ENCODE measurements at regions of chr10 and their contacts with region 1.

Region 1: GRCh38 chr10:77391605-77392235 is 245.9 kb downstream of the KCNMA1 start:
- DNase-seq: peak; percentile 74 to 84
- ATAC-seq: peak; percentile 82 to 84
- H3K4me3 ChIP-seq: no peak overlapping the region
- H3K27ac ChIP-seq: peak overlapping the region; percentile 69 to 83
- H3K4me1 ChIP-seq: peaks cover 53% of the 10 kb centered on the region
- CTCF ChIP-seq: peak; percentile 73
- EP300 ChIP-seq: no peak; a peak in 1 of 5 replicates
- POLR2A ChIP-seq: no peak
- RAD21 ChIP-seq: peak; percentile 78 to 83

Region 2: DNA sequence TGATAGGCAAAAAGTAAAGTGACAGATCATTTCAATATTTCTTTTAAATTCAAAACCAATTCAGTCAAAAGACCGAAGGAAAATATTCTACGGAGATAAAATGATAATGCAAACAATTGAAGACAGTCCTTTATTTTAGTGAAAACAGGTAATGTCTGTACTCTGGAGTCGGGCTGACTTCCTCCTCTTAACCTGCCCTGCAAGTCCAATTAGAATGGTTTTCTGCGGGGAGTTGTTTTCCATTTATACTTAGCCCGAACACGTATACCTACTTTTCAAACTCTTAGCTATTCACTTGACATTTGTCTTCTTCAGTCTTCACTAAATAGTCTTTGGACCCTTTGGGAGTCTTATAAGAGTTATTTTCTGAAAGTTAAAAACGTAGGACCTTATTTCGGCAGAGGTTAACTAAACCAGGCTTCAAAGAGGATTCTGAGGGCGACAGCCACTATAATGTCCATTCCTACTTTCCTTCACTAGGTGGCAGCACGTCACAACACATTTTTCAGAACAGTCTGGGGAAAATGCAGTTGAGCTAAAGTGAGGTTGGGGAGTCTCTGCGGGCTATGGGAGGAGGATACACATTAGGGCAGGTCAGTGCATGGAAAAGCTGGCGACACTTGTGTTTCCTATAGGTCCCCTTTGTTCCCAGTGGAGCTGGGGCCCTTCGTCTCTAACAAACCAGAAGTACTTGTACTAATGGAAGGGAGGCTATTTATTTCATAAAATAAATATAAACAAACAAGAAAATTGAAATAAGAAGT is 226.1 kb before region 1 on chr10:
- CTCF ChIA-PET with region 1: interaction called, 10 read pairs
- POLR2A ChIA-PET with region 1: no interaction called
- DNase-seq: peak; percentile 40 to 68
- ATAC-seq: peak; percentile 44 to 71; a peak in 5 of 6 replicates
- H3K4me3 ChIP-seq: no peak overlapping the region
- H3K27ac ChIP-seq: peak overlapping the region in 1 of 2 experiments; percentile 81; a peak in 4 of 6 replicates
- H3K4me1 ChIP-seq: peaks cover 48% of the 10 kb centered on the region
- CTCF ChIP-seq: peak; percentile 86
- EP300 ChIP-seq: no peak
- POLR2A ChIP-seq: no peak
- RAD21 ChIP-seq: peak; percentile 87 to 90

Region 3: GRCh38 chr10:77297393-77297739 is 94.4 kb before region 1 on chr10:
- CTCF ChIA-PET with region 1: interaction called, 10 read pairs
- POLR2A ChIA-PET with region 1: interaction called, 3 read pairs
- DNase-seq: peak in 1 of 2 experiments; percentile 25
- ATAC-seq: peak in 1 of 2 experiments; percentile 49; a peak in 2 of 6 replicates
- H3K4me3 ChIP-seq: no peak overlapping the region
- H3K27ac ChIP-seq: peak overlapping the region; percentile 10 to 69; a peak in 4 of 6 replicates
- H3K4me1 ChIP-seq: peaks cover 48% of the 10 kb centered on the region
- CTCF ChIP-seq: no peak
- EP300 ChIP-seq: no peak
- POLR2A ChIP-seq: no peak
- RAD21 ChIP-seq: no peak

Region 4: DNA sequence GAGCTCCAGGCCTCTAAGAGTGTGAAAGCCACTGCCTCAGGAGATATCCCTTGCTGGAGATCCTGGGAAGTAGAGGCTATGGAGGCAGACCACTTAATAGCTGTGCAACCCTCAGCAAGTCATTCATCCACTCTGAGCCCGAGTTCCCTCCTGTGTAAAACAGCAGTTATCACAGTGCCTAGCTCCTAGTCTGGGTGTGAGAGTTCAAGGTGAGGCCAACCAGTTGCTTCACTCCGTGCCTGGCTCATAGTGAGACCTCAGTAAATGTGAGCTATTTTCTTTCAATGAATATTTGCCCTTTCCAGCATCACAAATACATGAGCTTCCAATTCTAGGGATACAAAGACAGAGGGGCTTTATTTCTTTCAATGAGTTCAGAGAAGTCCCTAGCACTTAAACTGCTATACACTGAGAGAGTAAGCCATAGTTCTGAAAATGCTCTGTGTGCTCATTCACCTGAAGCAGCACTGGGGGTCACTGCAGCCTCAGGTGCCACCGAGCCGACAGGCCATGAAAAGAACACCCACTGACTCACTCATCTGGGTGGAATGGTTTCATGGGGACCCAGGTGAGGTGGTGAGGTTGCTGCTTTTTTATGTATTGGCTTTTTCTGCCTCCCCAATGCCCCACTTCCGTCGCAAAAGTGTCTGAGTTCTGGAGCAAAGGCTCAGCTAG is 13.9 kb before region 1 on chr10:
- CTCF ChIA-PET with region 1: interaction called, 24 read pairs
- POLR2A ChIA-PET with region 1: no interaction called
- DNase-seq: no peak
- ATAC-seq: peak in 1 of 2 experiments; percentile 30; a peak in 2 of 6 replicates
- H3K4me3 ChIP-seq: no peak overlapping the region
- H3K27ac ChIP-seq: peak overlapping the region in 1 of 2 experiments; percentile 31; a peak in 1 of 6 replicates
- H3K4me1 ChIP-seq: peaks cover 10% of the 10 kb centered on the region; the same call in 1 of the 3 replicates
- CTCF ChIP-seq: no peak
- EP300 ChIP-seq: no peak
- POLR2A ChIP-seq: no peak
- RAD21 ChIP-seq: peak in 1 of 2 experiments; percentile 22; a peak in 1 of 5 replicates

Region 5: DNA sequence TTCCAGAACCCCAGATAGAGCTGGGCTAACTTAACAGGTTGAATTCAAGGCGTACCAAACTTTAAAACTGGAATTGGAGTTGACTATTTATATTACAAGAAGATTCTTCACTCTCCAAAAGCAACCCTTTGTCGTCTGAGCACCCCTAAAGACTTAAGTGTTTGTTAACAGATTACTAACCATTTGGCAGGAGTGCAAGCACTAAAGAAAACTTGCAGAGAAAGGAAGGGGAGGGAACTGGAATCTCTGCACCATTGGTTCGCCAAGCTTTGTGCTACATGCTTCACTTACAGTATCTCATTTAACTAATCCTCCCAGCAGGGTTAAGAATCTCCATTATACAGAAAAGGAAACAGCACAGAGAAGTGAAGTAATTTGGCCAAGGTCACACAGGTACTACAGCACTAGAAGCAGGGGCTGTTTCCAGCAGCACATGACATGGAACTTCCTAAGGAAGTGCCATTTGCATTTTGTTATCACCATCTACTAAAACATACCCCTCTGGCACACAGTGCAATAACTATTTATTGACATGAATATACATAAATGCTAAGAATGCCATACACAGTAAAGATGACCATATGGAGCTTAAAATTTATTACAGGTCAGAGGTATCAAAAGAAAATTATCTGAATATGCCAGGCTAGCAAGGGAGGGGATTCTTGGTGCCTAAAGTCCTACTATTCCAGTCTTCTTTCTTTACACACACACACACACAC is 44.7 kb after region 1 on chr10:
- CTCF ChIA-PET with region 1: interaction called, 10 read pairs
- POLR2A ChIA-PET with region 1: no interaction called
- DNase-seq: no peak
- ATAC-seq: no peak; a peak in 1 of 6 replicates
- H3K4me3 ChIP-seq: no peak overlapping the region
- H3K27ac ChIP-seq: no peak overlapping the region
- H3K4me1 ChIP-seq: 0 out of 3 replicates have a peak, but pooled peaks cover under 1% of the 10 kb centered on the region
- CTCF ChIP-seq: no peak
- EP300 ChIP-seq: no peak
- POLR2A ChIP-seq: no peak
- RAD21 ChIP-seq: no peak

Region 6: GRCh38 chr10:77613476-77614130 is 221.9 kb after region 1 on chr10:
- CTCF ChIA-PET with region 1: no interaction called
- POLR2A ChIA-PET with region 1: no interaction called
- DNase-seq: no peak
- ATAC-seq: no peak
- H3K4me3 ChIP-seq: no peak overlapping the region
- H3K27ac ChIP-seq: no peak overlapping the region; a peak in 1 of 6 replicates
- H3K4me1 ChIP-seq: no peaks in the 10 kb centered on the region
- CTCF ChIP-seq: no peak
- EP300 ChIP-seq: no peak
- POLR2A ChIP-seq: no peak
- RAD21 ChIP-seq: no peak

Region 7: DNA sequence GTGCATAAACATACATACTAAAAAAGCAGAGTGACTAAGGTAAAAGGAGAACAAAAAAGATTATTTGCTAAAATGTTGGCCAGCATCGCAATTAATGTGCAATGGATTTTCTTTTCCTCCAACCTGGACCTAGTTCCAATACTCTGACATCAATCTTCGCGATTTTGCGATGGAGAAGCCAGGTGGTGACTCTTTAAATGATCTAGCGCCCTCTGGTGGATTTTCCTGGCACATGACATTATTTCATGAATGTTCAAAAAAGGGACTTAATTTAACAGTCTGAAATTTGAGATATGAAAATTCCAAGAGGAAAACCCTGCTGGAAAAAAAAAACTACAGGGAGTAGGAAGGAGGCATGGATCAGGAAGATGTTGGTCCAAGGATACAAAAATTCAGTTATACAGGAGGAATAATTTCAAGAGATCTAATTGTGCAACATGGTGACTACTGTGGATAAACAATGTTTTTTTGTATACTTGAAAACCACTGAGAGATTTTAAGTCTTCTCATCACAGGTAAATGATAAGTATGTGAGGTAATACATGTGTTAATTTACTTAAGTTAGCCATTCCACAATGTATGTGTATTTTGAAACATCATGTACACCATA is 250.2 kb after region 1 on chr10:
- CTCF ChIA-PET with region 1: interaction called, 102 read pairs
- POLR2A ChIA-PET with region 1: no interaction called
- DNase-seq: peak; percentile 75 to 78
- ATAC-seq: peak in 1 of 2 experiments; percentile 52; a peak in 3 of 6 replicates
- H3K4me3 ChIP-seq: no peak overlapping the region
- H3K27ac ChIP-seq: peak overlapping the region in 1 of 2 experiments; percentile 66; a peak in 2 of 6 replicates
- H3K4me1 ChIP-seq: peaks cover 10% of the 10 kb centered on the region; the same call in 2 of the 3 replicates
- CTCF ChIP-seq: peak; percentile 94
- EP300 ChIP-seq: no peak
- POLR2A ChIP-seq: no peak
- RAD21 ChIP-seq: peak; percentile 96 to 97

Measured in A549 (cell line).